Dendritic cell treated with granulocyte-macrophage colony-stimulating factor and Interleukin-4, amounts not matched to agents 40 ng/mL and 50 ng/mL, for 4 days (primary cell): ENCODE measurements at regions of chr1 and their contacts with region 1.

Region 1: DNA sequence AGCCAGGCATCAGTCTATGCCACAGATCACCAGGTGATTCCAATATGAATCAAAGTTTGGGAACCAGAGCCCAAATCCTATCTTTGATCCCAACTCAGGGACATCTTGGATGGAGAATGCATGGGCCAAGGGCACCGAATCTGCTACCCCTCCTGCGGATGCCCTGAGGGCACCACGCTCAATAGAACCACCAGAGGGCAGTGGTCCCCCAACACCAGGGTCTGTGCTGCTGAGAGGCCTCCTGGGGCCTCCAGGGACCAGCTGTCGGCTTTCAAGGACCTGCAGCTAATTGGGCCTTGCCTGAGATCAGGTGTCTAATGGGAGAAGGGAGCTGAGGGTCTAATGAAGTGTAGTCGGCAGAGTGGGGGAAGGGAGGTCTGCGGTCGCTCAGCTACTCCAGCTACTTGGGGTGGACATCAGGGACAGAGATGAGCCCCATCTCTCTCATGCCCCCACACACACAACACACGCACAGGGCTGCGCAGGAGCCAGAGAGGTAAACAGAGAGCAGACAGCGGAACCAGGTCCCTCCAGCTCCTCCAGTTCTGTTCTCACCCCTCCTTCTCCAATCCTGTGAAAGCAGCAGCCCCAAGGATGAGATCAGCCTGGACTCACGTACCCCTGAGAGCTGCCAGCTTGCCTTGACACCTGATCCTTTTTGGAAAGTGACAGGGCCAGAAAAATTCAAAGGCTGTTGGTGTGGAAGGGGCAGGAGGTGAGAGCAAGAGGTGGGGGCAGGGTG is 34.9 kb upstream of the PPP1R15B start:
- H3K4me3 Mint-ChIP-seq: no peak overlapping the region
- H3K27ac Mint-ChIP-seq: peak overlapping the region; percentile 11
- H3K4me1 Mint-ChIP-seq: peaks cover 17% of the 10 kb centered on the region
- H3K27me3 Mint-ChIP-seq: no peaks in the 10 kb centered on the region

Region 2: DNA sequence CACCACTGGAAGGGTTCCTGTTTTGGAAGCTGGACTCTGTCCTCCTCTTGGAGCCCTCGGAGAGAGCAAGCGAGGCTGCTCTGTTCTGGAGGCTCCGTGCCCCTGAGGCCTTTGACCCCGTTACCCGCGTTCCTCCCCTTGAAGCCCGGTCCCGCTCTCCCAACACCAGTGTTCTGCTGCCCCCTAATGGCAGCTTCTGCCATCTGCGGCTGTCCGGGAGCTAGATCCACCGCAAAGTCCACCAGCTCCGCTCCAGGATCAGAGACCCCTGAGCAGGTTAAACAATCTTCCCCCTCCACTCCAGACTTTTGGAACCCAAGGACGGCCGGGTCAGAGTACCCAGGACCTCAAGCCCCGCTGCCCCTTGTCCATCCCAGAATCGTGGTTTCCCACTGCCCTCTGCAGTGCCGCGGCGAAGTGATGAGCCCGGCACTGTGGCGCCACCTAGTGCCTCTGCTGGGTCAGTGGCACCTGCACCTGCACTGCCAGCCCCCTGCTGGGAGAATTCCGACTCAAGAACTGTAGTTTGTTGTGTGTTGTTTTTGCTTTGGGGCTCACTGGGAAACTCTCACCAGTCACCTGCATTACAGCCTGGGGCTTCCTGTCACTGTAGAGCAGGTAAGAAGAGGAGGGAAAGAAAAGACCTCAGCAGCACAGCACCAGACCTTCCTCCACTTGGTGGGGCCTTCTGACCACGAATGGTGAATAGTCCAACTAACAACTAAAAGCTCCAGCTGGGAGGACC is 360.6 kb after region 1 on chr1:
- intact Hi-C with region 1: loop called (anchors 5 kb)
- H3K4me3 Mint-ChIP-seq: peak overlapping the region; percentile 78
- H3K27ac Mint-ChIP-seq: no peak overlapping the region
- H3K4me1 Mint-ChIP-seq: peaks cover 7% of the 10 kb centered on the region
- H3K27me3 Mint-ChIP-seq: peaks cover 12% of the 10 kb centered on the region